ENCODE measurements at regions of chr1 and their contacts with region 1.

Region 1: DNA sequence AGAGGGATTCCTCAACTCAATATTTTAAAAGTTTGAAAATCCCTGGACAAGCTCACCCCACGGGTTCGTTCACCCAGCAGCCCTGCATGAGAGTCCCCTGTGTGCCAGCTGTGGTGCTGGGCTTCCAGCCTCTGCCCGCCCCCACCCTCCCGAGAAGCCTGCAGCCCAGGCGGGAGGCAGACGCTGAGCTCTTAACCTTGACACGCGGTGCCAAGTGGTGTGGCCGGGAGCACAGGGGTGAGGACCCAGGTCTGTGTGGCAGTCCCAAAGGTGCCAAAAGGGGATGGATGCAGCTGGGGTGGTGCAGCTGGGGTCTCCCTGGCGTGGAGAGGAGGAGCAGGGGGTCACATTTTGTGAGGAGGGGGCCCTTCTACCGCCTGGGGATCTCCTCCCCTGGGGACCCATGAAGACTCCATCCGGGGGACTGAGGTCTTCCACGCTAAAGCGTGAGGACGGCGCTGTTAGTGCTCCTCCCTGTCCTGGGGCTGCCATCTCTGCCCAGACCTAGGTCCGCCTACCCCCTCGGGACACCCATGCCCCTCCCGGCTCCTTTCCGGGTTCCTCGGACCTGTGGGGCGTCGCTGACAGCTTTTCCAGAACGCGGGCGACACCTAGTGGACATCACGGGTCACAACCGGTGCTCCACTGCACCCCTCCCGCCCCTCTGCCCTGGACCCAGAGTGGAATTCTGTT is 12.9 kb downstream of the PLA2G2F start:
- H3K4me3 ChIP-seq: no peak overlapping the region; the same call in 1 of the 2 replicates
- H3K27ac ChIP-seq: no peak overlapping the region
- H3K4me1 ChIP-seq: no peaks in the 10 kb centered on the region
- CTCF ChIP-seq: peak; percentile 89

Region 2: DNA sequence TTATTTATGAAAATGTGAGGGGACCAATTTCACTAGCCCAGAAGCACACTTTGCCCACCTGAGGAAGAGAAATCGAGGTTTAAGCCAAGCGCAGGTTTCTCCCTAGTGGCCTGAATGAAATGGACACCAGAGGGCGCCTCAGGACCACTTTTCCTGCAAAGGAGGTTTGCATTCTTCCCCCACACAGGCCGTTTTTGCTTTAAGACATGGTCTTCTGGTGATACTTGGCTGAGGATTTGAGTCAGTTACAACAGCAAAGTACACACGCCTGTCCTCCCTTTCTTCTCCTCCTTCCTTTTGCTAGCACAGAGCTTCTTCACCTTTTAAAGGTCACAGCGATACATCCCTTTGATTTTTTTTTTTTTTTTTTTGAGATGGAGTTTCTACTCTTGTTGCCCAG is 234.0 kb before region 1 on chr1:
- CTCF ChIA-PET with region 1: interaction called, 37 read pairs
- POLR2A ChIA-PET with region 1: no interaction called
- H3K4me3 ChIP-seq: no peak overlapping the region
- H3K27ac ChIP-seq: no peak overlapping the region
- H3K4me1 ChIP-seq: no peaks in the 10 kb centered on the region
- CTCF ChIP-seq: peak; percentile 84

Region 3: DNA sequence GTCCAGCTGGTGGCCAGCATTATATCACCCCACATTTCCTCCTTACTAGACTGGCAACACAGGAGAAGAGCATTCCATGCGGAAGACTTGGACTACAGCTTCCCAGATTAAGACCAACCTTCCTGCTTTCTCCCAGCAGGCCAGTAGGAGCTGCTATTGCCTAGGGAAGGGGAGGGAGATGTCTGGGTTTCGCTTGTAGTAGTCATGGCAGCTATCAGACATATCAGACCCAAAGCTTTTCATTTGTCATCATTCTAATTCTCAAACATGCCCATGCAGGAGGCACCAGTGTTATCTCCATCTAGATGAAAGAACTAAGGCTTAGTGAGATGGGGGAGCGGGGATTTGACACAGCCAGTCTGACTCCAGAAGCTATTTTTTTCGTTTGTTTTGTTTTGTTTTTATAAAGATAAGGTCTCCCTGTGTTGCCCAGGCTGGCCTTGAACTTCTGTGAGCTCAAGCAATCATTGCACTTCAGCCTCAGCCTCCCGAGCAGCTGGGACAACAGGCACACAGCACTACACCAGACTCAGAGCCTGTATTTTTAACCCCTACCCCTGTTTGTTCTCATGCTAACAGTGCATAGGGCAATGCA is 177.1 kb before region 1 on chr1:
- CTCF ChIA-PET with region 1: interaction called, 53 read pairs
- POLR2A ChIA-PET with region 1: no interaction called
- H3K4me3 ChIP-seq: no peak overlapping the region
- H3K27ac ChIP-seq: peak overlapping the region; percentile 19; the same call in 1 of the 2 replicates
- H3K4me1 ChIP-seq: peaks cover 5% of the 10 kb centered on the region
- CTCF ChIP-seq: peak; percentile 89

Region 4: DNA sequence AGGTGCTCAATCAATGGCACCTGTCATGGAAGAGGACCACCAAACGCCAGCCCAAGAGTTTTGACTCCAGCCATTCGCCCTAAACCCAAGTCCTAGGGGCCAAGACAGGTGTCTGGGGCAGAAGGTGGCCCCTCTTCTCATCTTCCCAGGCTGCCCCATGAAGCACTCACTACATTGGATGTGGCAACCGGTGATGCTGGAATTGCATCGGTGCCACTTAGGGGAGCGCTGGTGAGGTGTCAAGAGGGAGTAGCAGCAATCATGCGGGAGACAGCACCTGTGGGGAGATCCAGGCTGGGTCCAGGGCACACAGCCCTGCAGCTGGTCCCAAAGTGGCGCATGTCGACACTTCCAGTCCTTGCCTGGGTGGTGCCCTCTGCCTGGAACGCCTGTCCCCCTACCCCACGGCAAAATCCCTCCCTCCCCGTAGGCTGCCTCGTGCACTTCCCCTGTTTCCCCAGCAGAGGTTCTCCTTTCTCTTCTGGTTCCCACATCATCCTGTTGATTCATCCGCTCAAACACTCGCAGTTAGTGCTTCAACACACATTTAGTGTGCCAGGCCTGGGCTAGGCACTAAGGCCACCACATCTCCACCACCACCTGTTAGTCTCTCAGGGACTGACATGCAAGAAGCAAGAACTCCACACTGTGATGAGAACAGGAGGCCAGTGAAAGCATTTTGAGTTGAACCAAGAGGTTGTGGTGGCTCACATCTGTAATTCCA is 51.3 kb before region 1 on chr1:
- CTCF ChIA-PET with region 1: interaction called, 47 read pairs
- POLR2A ChIA-PET with region 1: interaction called, 3 read pairs
- H3K4me3 ChIP-seq: no peak overlapping the region
- H3K27ac ChIP-seq: no peak overlapping the region
- H3K4me1 ChIP-seq: no peaks in the 10 kb centered on the region
- CTCF ChIP-seq: peak; percentile 70

Region 5: GRCh38 chr1:20265250-20265649 is 113.2 kb after region 1 on chr1:
- CTCF ChIA-PET with region 1: no interaction called
- POLR2A ChIA-PET with region 1: no interaction called
- H3K4me3 ChIP-seq: no peak overlapping the region
- H3K27ac ChIP-seq: no peak overlapping the region
- H3K4me1 ChIP-seq: no peaks in the 10 kb centered on the region
- CTCF ChIP-seq: no peak

Measured in HEK293 (cell line).